ENCODE measurements at regions of chr7 and their contacts with region 1.

Region 1: DNA sequence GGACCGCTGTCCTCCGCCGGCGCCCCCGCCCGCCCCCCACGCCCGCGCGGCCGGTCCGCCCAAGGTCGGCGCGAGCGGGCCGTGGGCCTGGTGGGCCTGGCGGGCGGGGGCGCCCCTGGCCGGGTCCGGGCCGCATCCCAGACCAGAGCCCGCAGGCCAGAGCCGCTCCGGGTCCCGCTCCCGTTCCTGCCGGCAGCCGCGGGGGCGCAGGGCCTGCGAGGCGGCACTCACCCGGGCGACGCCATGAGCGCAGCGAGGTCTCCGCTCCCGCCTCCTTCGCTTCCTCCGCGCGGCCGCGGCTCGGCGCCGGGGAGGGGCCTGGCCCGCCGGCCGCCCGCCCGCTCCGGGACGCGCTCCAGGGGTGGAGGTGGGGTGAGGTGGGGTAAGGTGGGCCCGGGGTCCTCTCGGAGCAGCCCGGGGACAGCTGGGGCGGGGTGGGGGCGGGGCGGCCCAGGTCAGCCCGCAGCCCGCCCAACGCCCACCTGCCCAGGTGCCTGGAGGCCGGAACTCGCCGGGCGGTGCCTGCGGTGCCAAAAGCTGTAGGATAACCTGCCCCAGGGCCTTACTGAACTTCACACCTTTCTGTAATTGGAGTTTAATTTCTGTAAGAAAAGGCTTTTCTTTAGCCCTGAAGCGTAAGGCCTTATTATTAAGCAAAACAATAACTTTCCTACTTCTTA is at the start of gene URGCP:
- DNase-seq: peak in 5 of 10 donors; percentile 34 to 74 (median 57)
- H3K4me3 ChIP-seq: peak within 1 kb of the TSS; percentile 57 to 92 (median 78)
- H3K27ac ChIP-seq: peak within 1 kb of the TSS; percentile 1 to 94 (median 86)
- H3K27me3 ChIP-seq: no peaks in the 10 kb centered on the region
- CTCF ChIP-seq: peak in 1 of 56 donors; percentile 10
- total RNA-seq, gene URGCP: 38.6 to 96.9 (median 70.0) TPM

Region 2: GRCh38 chr7:43693687-43694398 is 212.6 kb before region 1 on chr7:
- intact Hi-C with region 1: no loop called
- DNase-seq: no peak
- H3K4me3 ChIP-seq: no peak overlapping the region
- H3K27ac ChIP-seq: no peak overlapping the region
- H3K27me3 ChIP-seq: no peaks in the 10 kb centered on the region
- CTCF ChIP-seq: no peak

Region 3: DNA sequence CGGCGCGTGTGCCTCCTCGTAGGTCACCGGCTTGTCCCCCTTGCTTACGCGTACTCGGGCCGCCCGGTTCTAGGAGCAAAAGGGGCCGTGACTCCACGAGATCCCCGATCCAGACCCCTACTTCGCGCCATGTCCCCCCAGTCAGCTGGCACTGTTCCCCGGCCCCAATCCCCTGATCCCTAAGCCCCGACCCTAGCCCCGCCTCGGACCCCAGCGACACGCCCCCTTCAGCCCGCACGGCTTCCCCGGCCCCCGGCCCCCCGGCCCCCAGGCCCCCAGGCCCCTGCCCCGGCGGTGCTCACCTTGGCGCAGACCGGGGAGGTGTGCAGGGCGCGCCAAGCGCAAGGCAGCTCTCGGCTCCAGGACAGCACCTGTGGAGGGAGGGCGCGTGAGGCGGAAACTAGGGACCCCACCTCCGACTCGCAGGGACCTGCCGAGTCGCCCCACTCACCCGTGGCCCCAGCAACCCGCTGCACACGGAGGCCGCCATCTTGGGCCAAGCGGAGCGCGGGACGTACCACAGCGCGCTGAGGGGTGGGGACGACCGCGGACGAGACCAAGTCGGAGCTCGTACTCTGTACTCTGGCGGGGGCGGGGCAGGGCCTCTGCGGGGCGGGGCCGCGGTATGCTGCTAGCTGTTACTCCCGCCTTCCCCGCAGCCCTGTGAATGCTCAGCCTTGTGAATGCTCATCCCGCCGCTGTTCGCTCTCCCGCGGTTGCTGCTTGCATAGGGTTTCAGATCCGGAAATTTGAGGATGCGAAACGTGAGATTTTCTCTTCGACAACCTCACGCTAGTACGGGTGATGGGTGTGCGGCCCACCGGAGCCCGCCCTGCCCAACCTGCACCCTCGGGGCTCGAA is 37.2 kb before region 1 on chr7 and contains the start of gene MRPS24:
- intact Hi-C with region 1: loop called in 1 of 2 experiments (anchors 5 kb)
- DNase-seq: peak; percentile 92 to 96 (median 95)
- H3K4me3 ChIP-seq: peak within 1 kb of the TSS; percentile 50 to 88 (median 77)
- H3K27ac ChIP-seq: peak within 1 kb of the TSS; percentile 73 to 99 (median 93)
- H3K27me3 ChIP-seq: no peaks in the 10 kb centered on the region
- CTCF ChIP-seq: peak in 23 of 56 donors; percentile 5 to 53 (median 23)
- total RNA-seq, gene MRPS24: 39.5 to 106 (median 68.7) TPM

Region 4: GRCh38 chr7:44508328-44509030 is 602.0 kb after region 1 on chr7:
- intact Hi-C with region 1: no loop called
- DNase-seq: no peak
- H3K4me3 ChIP-seq: no peak overlapping the region
- H3K27ac ChIP-seq: no peak overlapping the region
- H3K27me3 ChIP-seq: no peaks in the 10 kb centered on the region
- CTCF ChIP-seq: no peak